GM12878 (cell line): ENCODE measurements at regions of chr20 and their contacts with region 1.

Region 1: GRCh38 chr20:47501483-47502270 is at the start of gene NCOA3:
- DNase-seq: no peak
- ATAC-seq: peak; percentile 82
- H3K4me3 ChIP-seq: peak within 1 kb of the TSS; percentile 94
- H3K27ac ChIP-seq: peak within 1 kb of the TSS; percentile 92
- H3K4me1 ChIP-seq: peaks cover 30% of the 10 kb centered on the region
- H3K27me3 ChIP-seq: no peaks in the 10 kb centered on the region
- CTCF ChIP-seq: peak; percentile 15 to 43 (median 20); a peak in 3 of 6 replicates
- EP300 ChIP-seq: peak in 1 of 2 experiments; percentile 67; a peak in 2 of 4 replicates
- POLR2A ChIP-seq: peak; percentile 98
- RAD21 ChIP-seq: peak; percentile 24; the same call in 1 of the 2 replicates
- polyA plus RNA-seq, gene NCOA3: 16.9 to 18.0 TPM

Region 2: DNA sequence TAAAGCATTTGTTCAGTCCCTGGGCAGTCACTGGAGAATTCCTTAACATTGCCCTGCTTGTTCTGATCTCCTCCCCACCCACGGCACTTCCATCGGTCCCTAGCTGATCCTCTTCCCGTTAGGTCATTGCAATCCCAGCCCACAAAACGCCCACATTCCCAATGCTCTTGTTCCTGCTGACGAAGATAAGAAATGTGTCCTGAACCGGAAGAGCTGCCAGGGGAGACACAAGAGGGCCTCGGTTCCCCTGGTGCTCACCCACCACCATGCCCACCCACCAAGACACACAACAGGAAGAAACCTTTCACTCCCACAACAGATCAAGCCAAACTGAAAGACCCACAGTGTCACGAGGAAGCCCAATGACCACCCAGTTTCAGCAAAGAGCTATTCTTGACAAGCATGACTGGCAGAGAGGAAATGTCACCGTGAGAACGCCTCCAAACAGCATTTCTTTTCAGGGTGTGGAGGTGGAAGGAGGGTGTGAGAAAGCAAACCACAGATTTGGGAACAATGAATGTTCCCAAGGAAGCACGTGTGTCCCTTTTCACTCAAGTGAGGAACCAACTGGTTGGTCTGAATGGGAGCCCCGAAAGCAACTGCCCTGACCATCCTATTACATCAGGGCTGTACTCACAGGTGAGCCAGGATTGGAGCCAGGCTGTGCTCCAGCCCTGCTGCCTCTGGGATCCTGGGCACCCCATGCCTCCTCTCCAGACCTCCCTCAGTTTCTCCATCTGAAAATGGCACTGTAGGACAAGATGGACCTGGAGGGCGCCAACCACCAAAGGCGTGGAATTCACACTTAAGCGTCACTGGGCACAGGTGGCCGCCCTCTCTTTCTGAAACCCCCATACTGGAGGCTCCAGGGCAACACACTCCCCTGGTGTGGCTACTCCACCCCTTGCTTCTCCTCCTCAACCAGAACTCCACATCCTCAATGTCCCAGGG is 242.7 kb before region 1 on chr20:
- CTCF ChIA-PET with region 1: interaction called, 3 read pairs
- POLR2A ChIA-PET with region 1: no interaction called
- RAD21 ChIA-PET with region 1: interaction called, 3 read pairs
- SMC1A ChIA-PET with region 1: interaction called, 4 read pairs
- in situ Hi-C with region 1: no loop called
- intact Hi-C with region 1: loop called (anchors 5 kb)
- DNase-seq: peak; percentile 98
- ATAC-seq: peak; percentile 62
- H3K4me3 ChIP-seq: peak overlapping the region; percentile 3; the same call in 1 of the 2 replicates
- H3K27ac ChIP-seq: peak overlapping the region; percentile 86
- H3K4me1 ChIP-seq: peaks cover 58% of the 10 kb centered on the region
- H3K27me3 ChIP-seq: no peaks in the 10 kb centered on the region
- CTCF ChIP-seq: no peak
- EP300 ChIP-seq: peak in 1 of 2 experiments; percentile 90; a peak in 2 of 4 replicates
- POLR2A ChIP-seq: no peak; the same call in 1 of the 2 replicates
- RAD21 ChIP-seq: no peak

Region 3: DNA sequence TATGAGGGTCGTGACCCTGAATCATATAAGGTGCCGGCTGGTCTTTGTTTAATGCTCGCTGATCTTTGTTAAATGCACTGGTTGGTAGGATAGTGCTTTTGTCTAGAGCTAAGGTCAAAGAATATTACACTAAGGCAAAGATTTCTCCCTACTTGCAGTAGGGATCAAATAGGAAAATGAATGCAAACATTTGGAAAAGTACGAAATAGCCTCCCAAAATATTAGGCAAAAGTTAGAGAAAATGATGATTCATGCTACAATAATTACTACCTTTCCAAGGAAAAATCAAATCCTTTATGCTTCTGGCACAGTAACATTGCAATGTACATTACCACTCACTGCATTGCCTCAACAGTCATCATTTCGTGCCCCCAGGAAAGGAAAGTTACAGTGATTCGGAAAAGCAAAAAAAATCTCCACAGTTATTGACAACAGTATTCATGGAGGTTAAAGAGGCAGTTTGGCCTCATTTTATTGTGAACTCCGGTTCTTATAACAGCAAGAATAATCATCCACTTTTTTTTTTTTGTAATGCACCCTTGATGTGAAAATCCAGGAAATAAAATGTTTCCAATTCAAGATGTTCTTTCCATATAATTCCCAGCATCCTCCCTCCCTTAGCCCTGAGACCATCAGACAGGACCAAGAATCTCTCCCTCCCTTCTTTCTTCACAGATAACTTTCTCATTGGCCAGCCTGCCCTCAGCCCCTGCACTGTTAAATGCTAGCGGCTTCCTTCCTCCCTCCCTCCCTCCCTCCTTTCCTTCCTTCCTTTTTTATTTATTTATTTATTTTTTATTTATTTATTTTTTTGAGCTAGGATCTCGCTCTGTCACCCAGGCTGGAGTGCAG is 83.4 kb before region 1 on chr20:
- CTCF ChIA-PET with region 1: interaction called, 31 read pairs
- POLR2A ChIA-PET with region 1: interaction called, 123 read pairs
- RAD21 ChIA-PET with region 1: interaction called, 100 read pairs
- SMC1A ChIA-PET with region 1: interaction called, 86 read pairs
- in situ Hi-C with region 1: no loop called
- intact Hi-C with region 1: loop called (anchors 5 kb)
- DNase-seq: no peak
- ATAC-seq: no peak
- H3K4me3 ChIP-seq: no peak overlapping the region
- H3K27ac ChIP-seq: no peak overlapping the region
- H3K4me1 ChIP-seq: peaks cover 38% of the 10 kb centered on the region
- H3K27me3 ChIP-seq: no peaks in the 10 kb centered on the region
- CTCF ChIP-seq: no peak
- EP300 ChIP-seq: no peak
- POLR2A ChIP-seq: no peak
- RAD21 ChIP-seq: no peak

Region 4: DNA sequence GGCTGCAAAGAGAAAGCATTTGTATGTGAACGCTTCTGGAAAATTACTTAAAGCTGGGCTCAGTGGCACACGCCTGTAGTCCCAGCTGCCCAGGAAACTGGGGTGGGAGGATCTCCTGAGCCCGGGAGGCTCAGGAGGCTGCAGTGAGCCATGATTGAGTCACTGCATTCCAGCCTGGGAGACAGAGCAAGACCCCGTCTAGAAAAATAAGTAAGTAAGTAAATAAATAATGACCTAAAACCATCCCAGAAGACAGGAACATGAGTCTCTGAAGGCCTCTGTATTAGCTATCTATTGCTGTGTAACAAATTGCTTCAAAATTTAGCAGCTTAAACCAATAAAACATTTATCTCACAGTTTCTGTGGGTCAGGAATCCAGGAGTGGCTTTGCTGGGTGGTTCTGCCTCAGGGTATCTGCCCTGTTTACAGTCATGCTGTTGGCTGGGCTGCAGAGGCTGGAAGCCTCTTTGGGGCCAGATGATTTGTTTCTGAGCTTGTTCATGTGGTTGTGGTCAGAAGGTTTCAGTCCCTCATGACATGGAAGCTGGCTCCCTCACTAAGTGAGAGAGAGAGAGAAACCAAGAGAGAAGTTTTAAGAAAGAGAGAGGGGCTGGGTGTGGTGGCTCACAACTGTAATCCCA is 48.4 kb before region 1 on chr20:
- CTCF ChIA-PET with region 1: no interaction called
- POLR2A ChIA-PET with region 1: interaction called, 3 read pairs
- RAD21 ChIA-PET with region 1: interaction called, 5 read pairs
- SMC1A ChIA-PET with region 1: interaction called, 17 read pairs
- in situ Hi-C with region 1: no loop called
- intact Hi-C with region 1: loop called (anchors 5 kb)
- DNase-seq: peak; percentile 92
- ATAC-seq: peak; percentile 98
- H3K4me3 ChIP-seq: peak overlapping the region; percentile 36; the same call in 1 of the 2 replicates
- H3K27ac ChIP-seq: peak overlapping the region; percentile 87
- H3K4me1 ChIP-seq: peaks cover 31% of the 10 kb centered on the region
- H3K27me3 ChIP-seq: no peaks in the 10 kb centered on the region
- CTCF ChIP-seq: no peak
- EP300 ChIP-seq: peak; percentile 27 to 28; a peak in 2 of 4 replicates
- POLR2A ChIP-seq: peak; percentile 27; the same call in 1 of the 2 replicates
- RAD21 ChIP-seq: 0 out of 2 replicates have a peak, but pooled peaks have one; percentile 14

Region 5: DNA sequence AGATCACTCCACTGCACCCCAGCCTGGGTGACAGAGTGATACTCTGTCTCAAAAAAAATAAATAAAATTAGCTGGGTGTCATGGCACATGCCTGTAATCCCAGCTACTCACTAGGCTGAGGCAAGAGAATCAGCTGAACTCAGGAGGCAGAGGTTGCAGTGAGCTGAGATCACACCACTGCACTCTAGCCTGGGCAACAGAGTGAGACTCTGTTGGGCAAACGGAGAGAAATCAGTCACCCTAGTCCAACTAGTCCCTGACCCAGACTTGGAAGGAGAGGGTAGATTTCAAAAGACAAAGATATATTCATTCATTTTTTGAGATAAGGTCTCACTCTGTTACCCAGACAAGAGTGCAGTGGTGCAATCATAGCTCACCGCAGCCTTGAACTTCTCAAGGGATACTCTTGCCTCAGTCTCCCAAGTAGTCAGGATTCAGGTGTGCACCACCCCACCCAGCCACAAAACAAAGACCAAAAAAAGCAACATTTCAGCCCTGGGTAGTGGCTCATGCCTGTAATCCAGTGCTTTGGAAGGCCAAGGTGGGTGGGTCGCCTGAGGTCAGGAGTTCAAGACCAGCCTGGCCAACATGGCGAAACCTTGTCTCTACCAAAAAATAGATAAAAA is 26.1 kb before region 1 on chr20:
- CTCF ChIA-PET with region 1: interaction called, 7 read pairs
- POLR2A ChIA-PET with region 1: interaction called, 18 read pairs
- RAD21 ChIA-PET with region 1: interaction called, 11 read pairs
- SMC1A ChIA-PET with region 1: interaction called, 32 read pairs
- in situ Hi-C with region 1: no loop called
- intact Hi-C with region 1: no loop called
- DNase-seq: no peak
- ATAC-seq: no peak
- H3K4me3 ChIP-seq: no peak overlapping the region
- H3K27ac ChIP-seq: no peak overlapping the region
- H3K4me1 ChIP-seq: peaks cover 30% of the 10 kb centered on the region
- H3K27me3 ChIP-seq: no peaks in the 10 kb centered on the region
- CTCF ChIP-seq: no peak
- EP300 ChIP-seq: no peak
- POLR2A ChIP-seq: no peak
- RAD21 ChIP-seq: no peak

Region 6: DNA sequence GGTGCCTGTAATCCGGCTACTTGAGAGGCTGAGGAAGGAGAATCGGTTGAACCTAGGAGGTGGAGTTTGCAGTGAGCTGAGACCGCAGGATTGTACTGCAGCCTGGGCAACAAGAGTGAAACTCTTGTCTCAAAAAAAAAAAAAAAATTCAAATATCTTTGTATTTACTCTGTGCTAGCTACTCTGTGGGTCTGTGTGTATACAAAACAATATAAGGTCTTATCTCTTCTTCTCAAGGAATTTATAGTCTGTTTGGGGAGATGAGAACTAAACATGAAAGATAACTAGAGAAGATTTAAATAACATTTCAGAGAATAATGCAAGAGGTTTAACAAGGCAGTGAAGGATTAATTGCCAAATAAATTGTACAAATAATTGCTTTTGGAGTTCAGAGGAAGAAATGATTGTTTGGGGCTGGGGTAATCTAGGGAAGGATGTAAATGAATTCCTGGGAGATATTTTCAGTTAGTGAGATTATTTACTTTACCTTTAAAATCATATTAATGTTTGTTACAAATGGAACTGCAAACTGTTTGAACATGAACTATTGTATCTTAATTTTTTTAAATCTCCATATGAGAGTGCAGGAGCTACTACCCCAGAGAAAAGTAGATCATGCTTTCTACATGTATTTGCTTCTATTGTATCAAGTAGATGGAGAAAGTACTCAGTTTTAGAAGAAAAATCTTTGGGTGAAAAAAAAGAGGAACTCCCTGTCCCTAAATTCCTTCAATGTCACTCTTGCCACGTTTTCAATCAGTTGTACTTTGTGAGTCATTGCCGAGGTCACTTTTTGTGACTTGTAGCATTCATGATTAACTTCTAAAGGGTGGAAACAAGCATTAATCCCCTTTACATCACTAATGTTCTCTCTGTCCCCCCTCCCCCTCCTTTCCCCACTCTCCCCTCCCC is 39.0 kb after region 1 on chr20:
- CTCF ChIA-PET with region 1: no interaction called
- POLR2A ChIA-PET with region 1: interaction called, 6 read pairs
- RAD21 ChIA-PET with region 1: interaction called, 5 read pairs
- SMC1A ChIA-PET with region 1: interaction called, 12 read pairs
- in situ Hi-C with region 1: no loop called
- intact Hi-C with region 1: no loop called
- DNase-seq: peak; percentile 21
- ATAC-seq: peak; percentile 22; the same call in 2 of the 3 replicates
- H3K4me3 ChIP-seq: no peak overlapping the region
- H3K27ac ChIP-seq: no peak overlapping the region
- H3K4me1 ChIP-seq: peaks cover 35% of the 10 kb centered on the region
- H3K27me3 ChIP-seq: no peaks in the 10 kb centered on the region
- CTCF ChIP-seq: no peak
- EP300 ChIP-seq: no peak
- POLR2A ChIP-seq: no peak
- RAD21 ChIP-seq: no peak

Region 7: GRCh38 chr20:47610247-47610944 is 108.7 kb after region 1 on chr20:
- CTCF ChIA-PET with region 1: interaction called, 17 read pairs
- POLR2A ChIA-PET with region 1: interaction called, 9 read pairs
- RAD21 ChIA-PET with region 1: interaction called, 14 read pairs
- SMC1A ChIA-PET with region 1: interaction called, 9 read pairs
- in situ Hi-C with region 1: no loop called
- intact Hi-C with region 1: no loop called
- DNase-seq: peak; percentile 33
- ATAC-seq: peak; percentile 94
- H3K4me3 ChIP-seq: no peak overlapping the region
- H3K27ac ChIP-seq: peak overlapping the region; percentile 18; the same call in 1 of the 2 replicates
- H3K4me1 ChIP-seq: peaks cover 6% of the 10 kb centered on the region
- H3K27me3 ChIP-seq: no peaks in the 10 kb centered on the region
- CTCF ChIP-seq: no peak
- EP300 ChIP-seq: no peak
- POLR2A ChIP-seq: no peak
- RAD21 ChIP-seq: no peak

Region 8: DNA sequence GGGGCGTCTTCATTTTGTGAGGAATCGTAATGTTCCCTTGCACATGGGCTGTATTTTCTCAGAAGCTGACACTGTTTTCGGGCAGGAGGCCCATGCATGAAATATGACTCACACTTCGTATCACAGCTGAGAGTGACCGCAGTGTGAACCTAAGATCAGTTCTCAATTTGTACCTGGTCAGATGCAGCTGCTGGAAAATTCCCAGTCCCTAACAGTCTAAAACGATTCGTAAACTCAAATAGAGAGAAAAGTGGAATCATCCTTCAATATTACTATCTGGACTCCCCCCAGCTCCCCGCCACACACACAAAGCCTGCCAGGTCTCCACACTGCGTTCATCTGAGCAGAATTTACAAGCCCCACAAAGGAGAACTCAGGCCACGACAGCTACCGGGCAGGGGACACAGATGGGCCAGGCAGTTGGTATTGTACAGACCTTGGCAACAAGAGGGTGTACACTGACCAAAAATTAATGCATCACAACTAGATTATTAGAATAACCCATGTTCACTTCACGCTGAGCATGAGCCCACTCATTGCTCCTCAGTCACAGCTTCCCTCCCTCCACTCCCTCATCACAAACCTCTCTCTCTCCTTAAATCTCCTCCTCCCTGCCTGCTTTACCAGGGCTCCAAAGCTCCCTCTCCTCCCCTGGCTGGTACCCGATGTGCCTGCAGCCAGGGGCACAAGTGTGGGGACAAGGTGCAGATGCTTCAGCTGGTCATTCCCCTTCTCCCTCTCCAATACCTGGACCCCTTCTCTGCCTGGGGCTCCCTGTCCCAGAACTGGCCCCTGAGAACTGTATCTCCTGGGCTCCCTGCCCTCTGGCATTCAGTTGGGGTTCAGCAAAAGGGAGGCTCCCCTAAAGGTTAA is 837.7 kb after region 1 on chr20:
- CTCF ChIA-PET with region 1: no interaction called
- POLR2A ChIA-PET with region 1: no interaction called
- RAD21 ChIA-PET with region 1: no interaction called
- SMC1A ChIA-PET with region 1: no interaction called
- in situ Hi-C with region 1: no loop called
- intact Hi-C with region 1: no loop called
- DNase-seq: peak; percentile 63
- ATAC-seq: peak; percentile 76
- H3K4me3 ChIP-seq: no peak overlapping the region
- H3K27ac ChIP-seq: peak overlapping the region; percentile 67
- H3K4me1 ChIP-seq: peaks cover 22% of the 10 kb centered on the region
- H3K27me3 ChIP-seq: no peaks in the 10 kb centered on the region
- CTCF ChIP-seq: no peak
- EP300 ChIP-seq: peak; percentile 46 to 79; a peak in 3 of 4 replicates
- POLR2A ChIP-seq: no peak
- RAD21 ChIP-seq: peak; percentile 6; the same call in 1 of the 2 replicates